ENCODE measurements at regions of chr19 and their contacts with region 1.

Region 1: GRCh38 chr19:51393959-51394836 is 3.8 kb upstream of the C19orf84 start:
- DNase-seq: peak; percentile 98
- H3K4me3 Mint-ChIP-seq: peak overlapping the region; percentile 84
- H3K27ac Mint-ChIP-seq: peak overlapping the region; percentile 92
- H3K4me1 Mint-ChIP-seq: peaks cover 29% of the 10 kb centered on the region
- H3K27me3 Mint-ChIP-seq: peaks cover 2% of the 10 kb centered on the region

Region 2: DNA sequence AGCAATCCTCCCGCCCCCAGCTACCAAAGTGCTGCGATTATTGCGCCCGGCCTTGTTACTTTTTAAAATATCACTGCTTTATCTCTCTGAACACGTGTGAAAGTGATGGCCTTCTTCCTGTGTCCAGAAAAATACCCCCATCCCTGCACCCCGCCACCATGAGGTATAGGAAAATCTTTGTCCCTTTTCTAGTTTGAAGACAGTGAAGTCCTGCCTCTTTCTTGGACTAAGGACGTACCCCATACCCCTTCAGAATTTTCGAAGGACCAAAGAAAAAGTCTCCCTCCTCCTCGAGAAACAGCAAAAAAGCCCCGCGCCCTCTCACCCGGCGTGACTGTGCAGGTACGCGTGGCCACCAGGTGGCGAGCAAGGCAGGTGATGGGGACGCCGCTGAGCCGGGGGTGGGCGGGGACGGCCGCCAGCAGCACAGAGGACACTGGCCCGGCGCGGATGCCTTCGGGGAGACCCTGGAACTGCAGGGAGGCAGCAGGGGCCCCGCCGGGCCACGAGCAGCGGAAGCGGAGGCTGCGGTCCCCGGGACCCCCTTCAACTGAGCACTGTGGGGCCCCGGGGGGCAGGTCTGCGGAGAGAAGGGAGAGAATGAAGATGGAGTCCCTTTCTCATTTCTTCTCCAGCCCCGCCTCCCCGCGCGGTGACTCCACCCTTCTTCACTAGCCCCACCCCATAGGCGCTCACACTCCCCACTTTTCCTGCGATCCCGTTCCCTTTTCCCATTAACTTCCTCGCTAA is 55.5 kb before region 1 on chr19:
- CTCF ChIA-PET with region 1: interaction called, 9 read pairs
- POLR2A ChIA-PET with region 1: interaction called, 5 read pairs
- intact Hi-C with region 1: loop called (anchors 1 kb)
- DNase-seq: peak; percentile 92
- H3K4me3 Mint-ChIP-seq: peak overlapping the region; percentile 85
- H3K27ac Mint-ChIP-seq: no peak overlapping the region
- H3K4me1 Mint-ChIP-seq: peaks cover 15% of the 10 kb centered on the region
- H3K27me3 Mint-ChIP-seq: no peaks in the 10 kb centered on the region

Region 3: DNA sequence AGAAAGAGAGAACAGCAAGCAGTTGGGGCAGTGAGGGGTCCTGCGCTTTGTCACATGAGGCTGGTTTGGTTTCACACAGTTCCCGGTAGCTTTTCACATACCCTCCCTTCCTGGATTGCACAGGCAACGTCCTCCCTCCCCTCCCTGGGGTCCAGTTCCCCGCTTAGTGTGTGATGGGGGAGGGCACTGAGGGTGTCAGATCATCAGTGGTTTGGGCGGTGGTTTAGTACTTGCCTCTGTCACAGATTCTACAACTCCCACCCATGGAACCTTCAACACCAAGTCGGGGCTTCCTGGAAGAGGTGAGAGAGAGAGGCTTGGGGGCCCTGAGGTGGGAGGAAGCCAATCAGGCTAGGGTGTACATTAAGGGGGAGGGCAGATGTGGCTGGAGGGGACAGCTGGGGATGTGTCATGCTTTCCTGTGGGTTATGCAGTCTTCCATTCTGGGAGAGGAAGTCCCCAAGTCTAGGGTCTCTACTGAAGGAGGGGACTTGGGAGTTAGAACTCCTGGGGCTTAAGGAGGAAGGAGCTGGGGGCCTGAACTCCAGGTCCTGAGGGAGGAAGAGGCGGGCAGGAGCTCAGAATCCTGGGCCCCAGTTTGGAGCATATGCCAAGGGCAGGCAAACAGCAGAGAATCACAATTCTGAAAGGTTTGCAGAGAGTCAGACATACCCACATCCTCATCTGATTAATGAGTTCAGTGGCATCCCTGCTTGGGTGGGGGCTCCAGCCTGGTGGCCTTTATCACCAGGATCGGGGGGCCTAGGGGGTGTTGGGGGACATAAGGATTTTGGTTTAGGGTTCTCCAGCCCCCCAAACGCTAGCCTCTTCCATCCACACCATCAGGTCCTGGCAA is 21.3 kb before region 1 on chr19 and contains the start of gene NKG7:
- CTCF ChIA-PET with region 1: interaction called, 12 read pairs
- POLR2A ChIA-PET with region 1: interaction called, 27 read pairs
- intact Hi-C with region 1: loop called (anchors 1 kb)
- DNase-seq: peak; percentile 92
- H3K4me3 Mint-ChIP-seq: peak within 1 kb of the TSS; percentile 76
- H3K27ac Mint-ChIP-seq: peak within 1 kb of the TSS; percentile 95
- H3K4me1 Mint-ChIP-seq: peaks cover 71% of the 10 kb centered on the region
- H3K27me3 Mint-ChIP-seq: no peaks in the 10 kb centered on the region
- total RNA-seq, gene NKG7: 140 to 149 TPM

Region 4: GRCh38 chr19:51422053-51422448 is 27.9 kb after region 1 on chr19:
- CTCF ChIA-PET with region 1: interaction called, 24 read pairs
- POLR2A ChIA-PET with region 1: interaction called, 8 read pairs
- intact Hi-C with region 1: no loop called
- DNase-seq: peak; percentile 91
- H3K4me3 Mint-ChIP-seq: no peak overlapping the region
- H3K27ac Mint-ChIP-seq: no peak overlapping the region
- H3K4me1 Mint-ChIP-seq: peaks cover 18% of the 10 kb centered on the region
- H3K27me3 Mint-ChIP-seq: peaks cover 18% of the 10 kb centered on the region

Region 5: DNA sequence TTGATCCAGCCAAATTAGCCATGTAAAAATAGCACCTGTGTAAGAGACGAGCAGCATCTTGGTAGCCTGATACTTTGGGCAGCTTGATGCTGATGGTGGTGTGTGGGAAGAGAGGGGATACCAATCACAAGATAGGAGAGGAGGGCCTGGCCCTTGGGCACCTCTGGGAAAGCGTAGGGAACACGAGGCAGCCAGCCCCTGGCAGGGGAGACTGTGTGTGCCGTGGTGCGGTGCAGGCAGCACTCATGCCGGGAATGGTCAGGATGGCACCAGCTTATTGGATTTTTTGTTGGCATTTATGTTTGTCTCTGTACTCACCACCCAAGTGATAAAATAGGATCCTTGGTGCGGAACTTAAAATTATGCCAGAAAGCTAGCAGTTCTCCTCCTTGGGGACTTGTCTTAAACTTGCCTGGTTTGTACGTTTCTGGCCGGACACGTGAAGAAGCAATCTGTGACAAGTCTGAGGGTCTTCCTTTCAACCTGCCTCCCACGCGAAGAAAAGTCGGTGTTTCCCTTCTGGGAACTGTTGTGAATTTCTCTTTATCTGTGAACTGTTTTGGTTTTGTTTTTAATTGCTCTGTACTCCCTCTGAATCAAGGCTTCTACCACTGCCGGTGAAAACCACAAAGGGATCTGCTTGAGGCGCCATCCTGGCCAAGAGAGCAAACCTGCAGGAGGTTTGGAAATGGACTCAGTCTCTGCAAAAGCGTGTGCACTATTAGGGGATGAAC is 54.0 kb after region 1 on chr19:
- CTCF ChIA-PET with region 1: no interaction called
- POLR2A ChIA-PET with region 1: no interaction called
- intact Hi-C with region 1: loop called (anchors 2 kb)
- DNase-seq: peak; percentile 80
- H3K4me3 Mint-ChIP-seq: peak overlapping the region; percentile 51
- H3K27ac Mint-ChIP-seq: peak overlapping the region; percentile 93
- H3K4me1 Mint-ChIP-seq: peaks cover 51% of the 10 kb centered on the region
- H3K27me3 Mint-ChIP-seq: no peaks in the 10 kb centered on the region

Region 6: DNA sequence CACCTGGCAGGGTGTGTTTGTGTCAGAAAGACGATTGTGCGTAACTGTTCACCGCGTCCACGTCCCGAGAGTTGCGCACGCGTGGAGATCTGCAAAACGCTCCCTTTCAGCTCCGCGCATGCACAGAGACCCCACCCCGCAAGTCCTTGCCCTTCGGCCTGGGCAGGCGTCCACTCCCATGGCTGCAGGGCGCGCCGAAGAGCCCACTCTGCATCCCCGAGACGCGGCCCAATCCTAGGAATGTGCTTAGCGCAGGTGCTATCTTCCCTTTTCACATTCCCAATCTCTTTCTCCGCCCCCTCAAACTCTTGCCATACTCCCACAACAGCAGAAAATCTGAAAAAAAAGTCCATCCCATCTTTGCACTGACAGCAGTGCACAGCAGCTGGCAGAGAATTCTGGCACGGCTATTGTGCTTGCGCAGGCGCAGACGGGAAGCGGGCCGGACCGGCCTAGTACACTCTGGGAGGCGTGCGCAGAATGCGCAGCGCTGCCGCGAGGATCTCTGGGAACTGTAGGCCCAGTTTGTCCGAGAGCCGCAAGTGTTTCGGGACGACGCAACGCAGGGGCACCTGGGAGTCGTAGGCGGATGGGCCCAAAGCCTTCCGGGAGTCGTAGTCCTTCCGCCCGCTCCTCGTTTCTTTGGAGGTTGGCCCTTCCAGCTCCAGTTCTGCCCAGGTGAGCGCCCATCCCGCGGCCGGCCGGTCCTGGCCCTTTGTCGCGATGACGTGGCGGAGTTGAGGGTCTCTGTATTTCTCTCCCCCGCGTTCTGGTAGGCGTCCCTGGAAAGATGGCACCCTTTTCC is 200.0 kb after region 1 on chr19:
- CTCF ChIA-PET with region 1: no interaction called
- POLR2A ChIA-PET with region 1: no interaction called
- intact Hi-C with region 1: loop called (anchors 10 kb)
- DNase-seq: peak; percentile 97
- H3K4me3 Mint-ChIP-seq: peak overlapping the region; percentile 81
- H3K27ac Mint-ChIP-seq: peak overlapping the region; percentile 13
- H3K4me1 Mint-ChIP-seq: peaks cover 16% of the 10 kb centered on the region
- H3K27me3 Mint-ChIP-seq: peaks cover 3% of the 10 kb centered on the region

Measured in activated CD4-positive, alpha-beta memory T cell treated with anti-CD3 and anti-CD28 coated beads for 36 hours (primary cell).